AG04450 (cell line): ENCODE measurements at regions of chr2 and their contacts with region 1.

Region 1: GRCh38 chr2:192162392-192163042 is 32.2 kb downstream of the TMEFF2 start:
- DNase-seq: peak; percentile 58
- H3K4me3 ChIP-seq: no peak overlapping the region
- H3K27ac ChIP-seq: no peak overlapping the region
- H3K27me3 ChIP-seq: no peaks in the 10 kb centered on the region
- CTCF ChIP-seq: peak; percentile 93

Region 2: DNA sequence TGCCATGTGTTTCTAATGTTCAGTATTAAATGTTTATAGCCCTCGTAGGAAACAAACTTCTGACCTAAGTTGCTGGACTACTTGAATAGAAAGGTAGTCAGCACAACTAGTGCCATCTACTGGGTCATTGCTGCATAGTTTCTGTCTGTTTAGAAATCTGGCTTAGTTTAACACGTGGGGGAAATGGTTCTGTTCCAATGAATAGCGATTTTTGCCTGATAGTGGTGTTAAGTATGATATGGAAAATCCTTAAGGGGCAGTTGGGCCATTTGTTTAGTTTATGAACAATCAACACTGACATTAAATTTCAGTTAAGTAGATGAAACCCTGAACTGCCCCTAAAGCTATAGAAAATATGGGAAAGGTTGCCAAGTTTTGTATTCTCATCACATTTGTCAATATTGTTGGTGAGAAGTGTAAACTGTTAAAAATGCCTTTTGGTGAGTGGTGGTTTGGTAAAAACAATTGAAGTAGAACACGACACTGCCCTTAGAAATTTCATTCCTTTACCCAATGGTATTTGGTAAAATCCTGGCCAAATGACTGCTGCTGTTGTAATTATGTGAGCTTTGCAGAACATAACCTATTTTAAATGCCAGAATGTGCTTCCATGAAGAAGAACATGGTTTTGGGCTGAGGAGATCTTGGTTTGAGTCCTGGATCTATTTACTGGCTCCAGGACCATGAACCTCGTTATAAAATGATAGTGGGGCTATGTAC is 471.3 kb before region 1 on chr2:
- CTCF ChIA-PET with region 1: interaction called, 13 read pairs
- POLR2A ChIA-PET with region 1: no interaction called
- DNase-seq: peak; percentile 49
- H3K4me3 ChIP-seq: no peak overlapping the region
- H3K27ac ChIP-seq: no peak overlapping the region
- H3K27me3 ChIP-seq: no peaks in the 10 kb centered on the region
- CTCF ChIP-seq: peak; percentile 82

Region 3: DNA sequence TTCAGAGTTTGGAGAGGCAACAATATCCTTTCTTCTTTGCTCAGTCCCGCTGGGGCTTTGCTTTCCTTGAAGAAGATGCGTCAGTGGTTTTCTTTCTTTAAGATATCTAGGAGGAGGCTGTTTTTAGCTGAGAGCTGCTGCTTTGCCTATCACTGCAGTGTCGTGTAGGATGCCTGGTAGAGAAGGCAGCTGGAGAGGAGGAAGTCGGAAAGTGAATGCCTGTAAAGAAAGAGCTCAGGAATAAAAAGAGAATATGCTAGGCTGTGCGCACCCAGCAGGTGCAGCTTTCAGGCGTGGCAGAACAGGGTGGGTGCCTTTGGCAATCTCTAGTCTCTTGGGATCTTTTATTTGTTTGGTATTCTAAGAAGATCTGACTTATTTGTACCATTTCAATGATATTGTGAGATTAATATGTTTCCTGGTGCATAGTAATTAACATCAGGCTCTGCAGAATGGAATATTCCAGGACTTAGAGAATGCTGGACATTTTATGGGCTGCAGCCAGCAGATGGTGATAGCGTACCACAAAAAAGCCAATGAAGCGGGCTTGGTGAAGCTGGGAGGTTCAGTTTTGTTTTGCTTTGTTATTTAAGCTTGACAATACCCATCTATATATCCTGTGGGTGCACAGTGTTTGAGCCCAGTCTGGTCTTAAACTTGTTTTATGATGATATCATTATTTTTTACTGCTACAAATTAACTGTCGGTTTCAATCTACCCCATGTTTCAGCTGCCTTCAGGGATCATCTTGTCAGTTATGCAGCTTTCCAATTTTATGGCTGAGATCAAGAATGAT is 350.5 kb before region 1 on chr2:
- CTCF ChIA-PET with region 1: interaction called, 533 read pairs
- POLR2A ChIA-PET with region 1: interaction called, 9 read pairs
- DNase-seq: peak; percentile 47
- H3K4me3 ChIP-seq: no peak overlapping the region
- H3K27ac ChIP-seq: no peak overlapping the region
- H3K27me3 ChIP-seq: no peaks in the 10 kb centered on the region
- CTCF ChIP-seq: peak; percentile 90

Region 4: DNA sequence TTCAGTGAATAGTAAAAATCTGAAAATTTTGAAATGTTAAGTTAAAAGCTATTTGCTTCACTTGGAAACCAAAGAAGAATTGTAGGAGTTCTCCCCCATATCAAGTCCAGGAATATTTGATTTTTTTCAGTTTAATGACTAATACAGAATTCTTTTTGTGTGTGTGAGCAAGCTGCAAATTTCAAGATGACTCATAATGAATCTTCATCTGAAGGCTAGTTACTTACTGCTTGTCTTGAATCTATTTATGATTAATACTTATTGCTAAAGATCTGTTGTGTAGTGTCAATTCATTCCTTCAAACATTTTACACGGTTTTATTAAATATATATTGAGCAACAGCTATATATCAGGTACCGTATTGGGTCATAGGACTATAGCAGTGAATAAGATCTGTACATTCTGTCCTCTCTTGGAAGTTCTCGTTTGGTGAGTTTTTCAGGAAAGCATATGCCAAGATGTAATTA is 267.8 kb before region 1 on chr2:
- CTCF ChIA-PET with region 1: interaction called, 13 read pairs
- POLR2A ChIA-PET with region 1: no interaction called
- DNase-seq: peak; percentile 27
- H3K4me3 ChIP-seq: no peak overlapping the region
- H3K27ac ChIP-seq: peak overlapping the region; percentile 22
- H3K27me3 ChIP-seq: no peaks in the 10 kb centered on the region
- CTCF ChIP-seq: no peak

Region 5: GRCh38 chr2:192140236-192140839 is 22.2 kb before region 1 on chr2:
- CTCF ChIA-PET with region 1: interaction called, 19 read pairs
- POLR2A ChIA-PET with region 1: no interaction called
- DNase-seq: no peak
- H3K4me3 ChIP-seq: no peak overlapping the region
- H3K27ac ChIP-seq: no peak overlapping the region
- H3K27me3 ChIP-seq: no peaks in the 10 kb centered on the region
- CTCF ChIP-seq: no peak

Region 6: GRCh38 chr2:192286093-192286701 is 123.7 kb after region 1 on chr2:
- CTCF ChIA-PET with region 1: interaction called, 17 read pairs
- POLR2A ChIA-PET with region 1: no interaction called
- DNase-seq: peak; percentile 23
- H3K4me3 ChIP-seq: no peak overlapping the region
- H3K27ac ChIP-seq: no peak overlapping the region
- H3K27me3 ChIP-seq: no peaks in the 10 kb centered on the region
- CTCF ChIP-seq: peak; percentile 72

Region 7: GRCh38 chr2:192379736-192380135 is 217.2 kb after region 1 on chr2:
- CTCF ChIA-PET with region 1: no interaction called
- POLR2A ChIA-PET with region 1: no interaction called
- DNase-seq: no peak
- H3K4me3 ChIP-seq: no peak overlapping the region
- H3K27ac ChIP-seq: no peak overlapping the region
- H3K27me3 ChIP-seq: no peaks in the 10 kb centered on the region
- CTCF ChIP-seq: no peak

Region 8: DNA sequence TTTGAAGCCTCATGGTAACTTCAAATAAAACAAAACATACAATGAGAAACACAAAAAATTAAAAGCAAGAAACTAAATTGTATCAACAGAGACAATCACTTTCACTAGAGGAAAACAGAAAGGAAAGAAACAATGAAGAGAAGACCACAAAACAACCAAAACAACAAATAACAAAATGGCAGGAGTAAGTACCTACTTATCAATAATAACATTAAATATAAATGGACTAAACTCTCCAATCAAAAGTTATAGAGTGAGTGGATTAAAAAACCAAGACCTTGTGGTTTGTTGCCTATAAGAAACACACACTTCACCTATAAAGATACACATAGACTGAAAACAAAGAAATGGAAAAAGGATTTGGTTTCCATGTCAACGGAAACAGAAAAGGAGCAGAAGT is 862.3 kb after region 1 on chr2:
- CTCF ChIA-PET with region 1: no interaction called
- POLR2A ChIA-PET with region 1: no interaction called
- DNase-seq: no peak
- H3K4me3 ChIP-seq: no peak overlapping the region
- H3K27ac ChIP-seq: no peak overlapping the region
- H3K27me3 ChIP-seq: no peaks in the 10 kb centered on the region
- CTCF ChIP-seq: no peak